GM12878 (cell line): ENCODE measurements at regions of chr9 and their contacts with region 1.

Region 1: GRCh38 chr9:87581513-87581912 is 83.8 kb downstream of the DAPK1 start:
- DNase-seq: no peak
- ATAC-seq: no peak
- H3K4me3 ChIP-seq: no peak overlapping the region
- H3K27ac ChIP-seq: no peak overlapping the region
- H3K4me1 ChIP-seq: peaks cover 20% of the 10 kb centered on the region
- H3K27me3 ChIP-seq: no peaks in the 10 kb centered on the region
- CTCF ChIP-seq: no peak
- EP300 ChIP-seq: no peak
- POLR2A ChIP-seq: no peak
- RAD21 ChIP-seq: no peak

Region 2: GRCh38 chr9:87280421-87280820 is 301.1 kb before region 1 on chr9:
- CTCF ChIA-PET with region 1: no interaction called
- POLR2A ChIA-PET with region 1: no interaction called
- RAD21 ChIA-PET with region 1: no interaction called
- SMC1A ChIA-PET with region 1: no interaction called
- in situ Hi-C with region 1: no loop called
- intact Hi-C with region 1: no loop called
- DNase-seq: no peak
- ATAC-seq: no peak
- H3K4me3 ChIP-seq: no peak overlapping the region
- H3K27ac ChIP-seq: no peak overlapping the region
- H3K4me1 ChIP-seq: no peaks in the 10 kb centered on the region; the same call in none of the 2 replicates
- H3K27me3 ChIP-seq: no peaks in the 10 kb centered on the region; a peak in 1 of 4 replicates
- CTCF ChIP-seq: no peak
- EP300 ChIP-seq: no peak
- POLR2A ChIP-seq: no peak
- RAD21 ChIP-seq: no peak

Region 3: DNA sequence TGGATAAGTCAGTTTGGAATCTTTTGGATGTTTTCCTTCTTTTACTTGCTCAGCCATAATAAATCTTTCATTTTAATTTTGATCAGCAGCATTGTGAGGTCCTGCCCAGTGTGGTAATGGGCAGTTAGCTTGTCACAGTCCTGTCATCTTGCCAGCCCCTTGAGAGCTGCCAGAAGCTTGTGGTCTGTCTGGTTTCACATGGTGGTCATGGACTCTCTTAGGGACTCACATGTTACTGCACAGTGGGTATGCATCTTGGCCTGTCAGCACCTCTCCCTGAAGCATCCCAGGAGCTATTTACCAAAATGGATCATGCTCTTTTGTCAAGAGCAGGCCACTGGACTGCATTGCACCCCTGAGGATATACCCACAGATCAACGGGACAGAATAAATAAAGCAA is 23.5 kb before region 1 on chr9:
- CTCF ChIA-PET with region 1: interaction called, 3 read pairs
- POLR2A ChIA-PET with region 1: interaction called, 5 read pairs
- RAD21 ChIA-PET with region 1: interaction called, 4 read pairs
- SMC1A ChIA-PET with region 1: interaction called, 57 read pairs
- in situ Hi-C with region 1: no loop called
- intact Hi-C with region 1: no loop called
- DNase-seq: peak; percentile 64
- ATAC-seq: peak; percentile 71
- H3K4me3 ChIP-seq: no peak overlapping the region
- H3K27ac ChIP-seq: peak overlapping the region; percentile 75
- H3K4me1 ChIP-seq: peaks cover 64% of the 10 kb centered on the region
- H3K27me3 ChIP-seq: no peaks in the 10 kb centered on the region
- CTCF ChIP-seq: no peak
- EP300 ChIP-seq: no peak
- POLR2A ChIP-seq: no peak
- RAD21 ChIP-seq: no peak

Region 4: GRCh38 chr9:87569518-87569917 is 12.0 kb before region 1 on chr9:
- CTCF ChIA-PET with region 1: interaction called, 23 read pairs
- POLR2A ChIA-PET with region 1: interaction called, 16 read pairs
- RAD21 ChIA-PET with region 1: interaction called, 14 read pairs
- SMC1A ChIA-PET with region 1: interaction called, 66 read pairs
- in situ Hi-C with region 1: no loop called
- intact Hi-C with region 1: no loop called
- DNase-seq: no peak
- ATAC-seq: peak; percentile 63
- H3K4me3 ChIP-seq: no peak overlapping the region
- H3K27ac ChIP-seq: peak overlapping the region; percentile 28; the same call in 1 of the 2 replicates
- H3K4me1 ChIP-seq: peaks cover 27% of the 10 kb centered on the region
- H3K27me3 ChIP-seq: no peaks in the 10 kb centered on the region
- CTCF ChIP-seq: no peak
- EP300 ChIP-seq: no peak
- POLR2A ChIP-seq: no peak
- RAD21 ChIP-seq: no peak

Region 5: DNA sequence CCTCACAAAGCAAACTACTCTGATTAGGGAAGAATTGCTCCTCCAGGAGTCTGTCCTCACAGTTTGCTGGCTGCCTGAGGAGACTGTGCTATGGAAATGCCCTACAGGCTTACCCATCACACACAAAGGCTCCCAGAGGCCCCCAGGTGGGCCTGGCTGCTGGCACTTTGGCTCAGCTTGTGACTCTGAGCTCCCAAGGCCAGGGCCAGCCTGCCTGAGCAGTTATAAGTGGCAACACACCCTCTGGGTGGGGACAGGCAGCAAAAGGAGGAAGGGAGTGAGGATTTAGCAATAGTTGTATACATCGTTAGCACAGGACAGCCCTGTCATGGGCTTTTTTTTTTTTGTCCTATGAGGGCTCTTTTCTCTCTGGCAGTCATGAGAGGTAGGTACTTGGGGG is 19.7 kb after region 1 on chr9:
- CTCF ChIA-PET with region 1: interaction called, 3 read pairs
- POLR2A ChIA-PET with region 1: no interaction called
- RAD21 ChIA-PET with region 1: interaction called, 12 read pairs
- SMC1A ChIA-PET with region 1: interaction called, 5 read pairs
- in situ Hi-C with region 1: no loop called
- intact Hi-C with region 1: no loop called
- DNase-seq: no peak
- ATAC-seq: no peak; the same call in 2 of the 3 replicates
- H3K4me3 ChIP-seq: no peak overlapping the region
- H3K27ac ChIP-seq: no peak overlapping the region
- H3K4me1 ChIP-seq: peaks cover 9% of the 10 kb centered on the region; the same call in 1 of the 2 replicates
- H3K27me3 ChIP-seq: no peaks in the 10 kb centered on the region
- CTCF ChIP-seq: no peak
- EP300 ChIP-seq: no peak
- POLR2A ChIP-seq: no peak
- RAD21 ChIP-seq: no peak

Region 6: DNA sequence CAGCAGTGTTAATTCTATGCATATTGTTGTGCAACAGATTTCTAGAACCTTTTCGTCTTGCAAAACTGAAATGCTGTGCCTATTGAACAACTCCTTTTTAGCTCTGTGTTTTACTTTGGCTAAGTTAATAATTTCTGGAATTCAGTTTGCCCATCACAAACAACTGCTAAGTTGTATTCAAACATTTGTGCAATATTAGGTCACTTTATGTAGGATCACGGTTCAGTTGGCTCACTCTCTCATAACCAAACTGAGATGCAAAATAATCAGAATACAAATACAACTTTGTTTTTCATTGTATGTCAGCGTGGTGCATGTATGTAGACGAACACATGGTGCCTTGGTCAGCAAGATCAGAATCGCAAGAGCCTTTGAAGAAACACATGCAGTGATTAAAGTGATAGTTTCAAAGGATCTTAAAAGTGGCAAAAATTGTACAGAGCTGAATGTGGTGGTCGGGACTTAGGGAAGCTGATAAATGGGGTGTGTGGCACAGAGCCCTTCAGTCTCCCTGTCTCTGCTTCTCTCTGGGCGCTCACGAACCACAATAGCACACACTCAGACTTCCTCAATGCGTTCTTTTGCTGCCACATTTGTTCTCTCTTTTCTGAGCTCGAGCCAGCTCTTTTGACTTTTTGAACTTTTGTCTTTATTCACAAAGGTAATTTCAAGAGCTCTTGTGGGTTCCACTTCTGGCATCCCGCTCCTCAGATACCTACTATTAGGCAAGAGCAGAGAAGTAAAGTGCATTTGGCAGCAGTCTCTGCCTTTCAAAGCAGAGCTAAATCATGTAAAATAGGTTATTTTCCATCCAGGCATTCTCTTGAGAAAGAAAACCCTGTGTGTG is 32.0 kb after region 1 on chr9:
- CTCF ChIA-PET with region 1: interaction called, 4 read pairs
- POLR2A ChIA-PET with region 1: no interaction called
- RAD21 ChIA-PET with region 1: interaction called, 10 read pairs
- SMC1A ChIA-PET with region 1: interaction called, 6 read pairs
- in situ Hi-C with region 1: no loop called
- intact Hi-C with region 1: no loop called
- DNase-seq: peak; percentile 21
- ATAC-seq: peak; percentile 71
- H3K4me3 ChIP-seq: peak overlapping the region; percentile 11; the same call in 1 of the 2 replicates
- H3K27ac ChIP-seq: peak overlapping the region; percentile 59
- H3K4me1 ChIP-seq: peaks cover 27% of the 10 kb centered on the region
- H3K27me3 ChIP-seq: no peaks in the 10 kb centered on the region
- CTCF ChIP-seq: no peak
- EP300 ChIP-seq: no peak
- POLR2A ChIP-seq: no peak
- RAD21 ChIP-seq: no peak